ENCODE measurements at regions of chr1 and their contacts with region 1.

Region 1: DNA sequence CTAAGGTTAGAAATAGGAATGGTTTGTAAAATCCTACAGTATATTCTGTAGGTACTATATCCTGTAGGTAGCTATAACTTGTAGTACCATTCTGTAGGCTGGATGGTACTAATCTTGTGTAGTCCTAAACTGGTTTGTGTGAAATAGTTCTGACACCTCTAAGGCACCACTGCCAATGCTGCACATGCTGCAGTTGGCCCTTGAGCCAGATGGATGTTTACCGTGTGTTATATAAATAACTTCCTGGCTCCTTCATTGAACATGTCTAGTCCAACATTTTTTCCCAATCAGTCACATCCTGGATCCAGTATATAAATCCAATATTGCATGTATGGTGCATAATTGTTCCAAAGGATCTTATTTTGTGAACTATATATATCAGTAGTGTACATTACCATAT is 89.5 kb upstream of the GNG4 start:
- DNase-seq: no peak
- H3K4me3 Mint-ChIP-seq: no peak overlapping the region
- H3K27ac Mint-ChIP-seq: no peak overlapping the region
- H3K4me1 Mint-ChIP-seq: peaks cover 8% of the 10 kb centered on the region
- H3K27me3 Mint-ChIP-seq: no peaks in the 10 kb centered on the region

Region 2: DNA sequence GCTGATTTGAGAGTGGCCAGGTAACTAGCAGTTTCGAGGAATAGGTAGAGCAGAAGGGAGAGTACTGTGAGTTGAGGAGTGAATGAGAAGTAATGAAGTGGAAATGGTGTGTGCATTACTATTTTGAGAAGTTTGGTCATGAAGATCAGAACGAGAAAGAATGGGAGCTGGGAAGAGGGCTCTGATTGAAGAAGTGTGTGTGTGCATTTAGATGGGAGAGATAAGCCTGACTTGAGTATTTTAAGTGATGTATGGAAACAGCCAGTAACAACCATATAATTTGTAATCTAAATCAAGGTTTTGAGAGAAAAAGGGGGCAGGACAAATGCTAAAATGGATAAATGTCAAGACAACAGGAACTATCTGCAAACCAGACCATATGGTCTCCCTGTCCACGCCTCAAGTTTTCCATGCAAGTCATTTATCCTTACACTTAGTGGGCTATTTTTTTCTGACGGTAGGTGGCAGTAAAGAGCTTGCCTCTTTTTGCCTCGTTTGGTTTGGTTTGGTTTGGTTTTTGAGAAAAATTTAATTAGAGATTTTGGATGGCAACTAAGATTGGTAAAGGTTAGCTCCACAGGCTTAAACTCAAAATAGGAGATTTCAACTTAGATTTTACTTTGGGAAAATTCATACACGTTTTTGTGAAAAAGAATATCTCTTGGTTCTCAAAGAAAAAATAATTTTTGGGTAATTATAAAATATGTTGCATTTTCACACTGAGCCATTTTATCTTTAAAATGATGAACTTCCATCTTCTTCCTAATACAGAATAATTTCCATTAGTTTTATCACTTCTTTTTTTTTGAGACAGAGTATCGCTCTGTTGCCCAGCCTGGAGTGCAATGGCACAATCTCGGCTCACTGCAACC is 225.4 kb before region 1 on chr1:
- intact Hi-C with region 1: loop called (anchors 5 kb)
- DNase-seq: no peak
- H3K4me3 Mint-ChIP-seq: no peak overlapping the region
- H3K27ac Mint-ChIP-seq: no peak overlapping the region
- H3K4me1 Mint-ChIP-seq: peaks cover 9% of the 10 kb centered on the region
- H3K27me3 Mint-ChIP-seq: peaks cover 16% of the 10 kb centered on the region

Region 3: DNA sequence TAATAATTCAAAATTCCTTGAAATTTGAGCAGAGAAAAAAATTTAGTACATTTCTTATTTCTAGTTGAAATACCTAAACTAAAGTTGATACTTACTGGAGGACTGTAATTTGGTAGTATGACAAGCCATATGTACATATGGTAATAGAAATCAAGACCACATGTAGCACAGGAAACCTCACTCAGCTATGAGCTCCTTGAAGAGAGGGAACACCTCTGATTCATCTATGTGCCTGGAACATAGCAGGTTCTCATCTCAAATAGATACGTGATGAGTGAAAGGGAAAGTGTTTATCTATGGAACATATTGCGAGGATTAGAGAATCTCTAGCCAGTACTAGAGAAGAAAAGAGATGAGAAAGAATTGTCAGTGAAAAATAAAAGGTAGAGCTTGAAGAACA is 41.6 kb before region 1 on chr1:
- intact Hi-C with region 1: loop called (anchors 5 kb)
- DNase-seq: no peak
- H3K4me3 Mint-ChIP-seq: no peak overlapping the region
- H3K27ac Mint-ChIP-seq: peak overlapping the region; percentile 80
- H3K4me1 Mint-ChIP-seq: peaks cover 16% of the 10 kb centered on the region
- H3K27me3 Mint-ChIP-seq: no peaks in the 10 kb centered on the region

Region 4: DNA sequence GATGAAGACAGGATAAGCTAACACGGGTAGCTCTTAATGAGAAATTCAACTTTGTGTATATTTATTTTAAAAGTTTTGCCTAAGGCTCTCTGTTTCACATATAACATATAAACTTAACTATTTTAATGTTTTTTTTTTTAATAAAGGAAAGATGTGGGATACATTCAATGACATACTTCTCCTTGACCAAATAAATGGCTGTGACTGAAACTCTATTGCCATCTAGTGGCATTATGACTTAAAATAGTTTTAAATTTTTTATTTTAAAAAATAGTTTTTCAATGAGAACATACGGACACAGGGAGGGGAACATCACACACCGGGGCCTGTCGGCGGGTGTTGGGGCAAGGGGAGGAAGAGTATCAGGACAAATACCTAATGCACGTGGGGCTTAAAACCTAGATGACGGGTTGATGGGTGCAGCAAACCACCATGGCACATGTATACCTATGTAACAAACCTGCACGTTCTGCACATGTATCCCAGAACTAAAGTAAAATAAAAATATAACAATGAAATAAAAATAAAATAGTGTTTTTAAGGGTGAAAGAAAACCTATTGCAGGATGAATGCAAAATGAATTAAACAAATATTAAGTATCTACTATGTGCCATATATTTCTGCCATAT is 44.1 kb after region 1 on chr1:
- intact Hi-C with region 1: loop called (anchors 10 kb)
- DNase-seq: no peak
- H3K4me3 Mint-ChIP-seq: no peak overlapping the region
- H3K27ac Mint-ChIP-seq: no peak overlapping the region
- H3K4me1 Mint-ChIP-seq: peaks cover 1% of the 10 kb centered on the region
- H3K27me3 Mint-ChIP-seq: no peaks in the 10 kb centered on the region